Naive thymus-derived CD8-positive, alpha-beta T cell (primary cell): ENCODE measurements at regions of chr1 and their contacts with region 1.

Region 1: DNA sequence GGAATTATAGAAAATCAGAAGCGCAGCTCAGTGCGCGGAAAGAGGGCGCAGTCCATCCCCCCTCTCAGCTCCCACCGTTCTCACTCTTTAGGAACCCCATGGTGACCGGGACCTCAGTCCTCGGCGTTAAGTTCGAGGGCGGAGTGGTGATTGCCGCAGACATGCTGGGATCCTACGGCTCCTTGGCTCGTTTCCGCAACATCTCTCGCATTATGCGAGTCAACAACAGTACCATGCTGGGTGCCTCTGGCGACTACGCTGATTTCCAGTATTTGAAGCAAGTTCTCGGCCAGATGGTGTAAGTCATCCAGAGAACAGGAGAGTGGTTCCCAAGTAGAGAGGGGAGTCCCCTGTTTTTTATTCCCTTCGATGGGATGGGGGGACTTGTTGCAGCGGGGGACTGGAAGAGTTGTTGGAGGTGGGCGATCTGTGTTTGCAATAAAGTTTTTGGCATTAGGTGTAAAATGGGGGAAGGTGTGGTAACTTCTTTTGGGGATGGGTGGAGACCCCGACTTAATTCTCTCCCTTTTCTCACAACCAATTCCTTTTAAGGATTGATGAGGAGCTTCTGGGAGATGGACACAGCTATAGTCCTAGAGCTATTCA is 620 bp downstream of the PSMB4 start:
- DNase-seq: peak in 1 of 10 donors; percentile 4
- ATAC-seq: peak; percentile 8 to 14
- H3K4me3 Mint-ChIP-seq: peak overlapping the region; percentile 87 to 99 (median 94)
- H3K27ac Mint-ChIP-seq: peak overlapping the region; percentile 92 to 100 (median 98)
- H3K4me1 Mint-ChIP-seq: peaks cover 15 to 27% (median 25%) of the 10 kb centered on the region in 4 donors
- H3K27me3 Mint-ChIP-seq: no peaks in the 10 kb centered on the region

Region 2: GRCh38 chr1:151210830-151211229 is 189.2 kb before region 1 on chr1:
- POLR2A ChIA-PET with region 1: no interaction called
- DNase-seq: no peak
- ATAC-seq: no peak
- H3K4me3 Mint-ChIP-seq: peak overlapping the region in 1 of 10 donors; percentile 15
- H3K27ac Mint-ChIP-seq: peak overlapping the region in 3 of 10 donors; percentile 5 to 92 (median 11)
- H3K4me1 Mint-ChIP-seq: peaks cover 6 to 39% (median 19%) of the 10 kb centered on the region in 4 donors
- H3K27me3 Mint-ChIP-seq: no peaks in the 10 kb centered on the region

Region 3: GRCh38 chr1:151327223-151327902 is 72.6 kb before region 1 on chr1 and contains the start of gene PI4KB:
- POLR2A ChIA-PET with region 1: interaction called, 10 read pairs
- DNase-seq: peak; percentile 72 to 98 (median 90)
- ATAC-seq: peak; percentile 91 to 95
- H3K4me3 Mint-ChIP-seq: peak within 1 kb of the TSS; percentile 93 to 99 (median 97)
- H3K27ac Mint-ChIP-seq: peak within 1 kb of the TSS; percentile 94 to 100 (median 98)
- H3K4me1 Mint-ChIP-seq: peaks cover 24 to 47% (median 45%) of the 10 kb centered on the region in 4 donors
- H3K27me3 Mint-ChIP-seq: no peaks in the 10 kb centered on the region
- polyA plus RNA-seq, gene PI4KB: 42.4 to 63.3 (median 52.3) TPM

Region 4: DNA sequence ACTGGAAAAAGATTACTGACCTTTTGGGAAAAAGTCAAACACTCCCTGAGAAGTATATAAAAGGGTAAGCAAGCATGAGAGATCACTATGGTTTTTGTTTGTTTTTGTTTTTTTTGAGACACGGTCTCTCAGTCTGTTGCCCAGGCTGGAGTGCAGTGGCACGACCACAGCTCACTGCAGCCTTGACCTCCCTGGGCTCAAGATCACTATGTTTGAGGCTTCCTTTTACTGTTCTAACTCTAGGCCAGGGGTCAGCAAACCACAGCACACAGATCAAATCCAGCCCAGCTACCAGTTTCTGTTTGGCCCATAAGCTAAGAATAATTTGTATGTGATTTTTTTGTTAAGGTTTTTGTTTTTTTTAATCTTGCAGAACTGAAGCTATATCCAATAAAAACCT is 25.1 kb after region 1 on chr1:
- POLR2A ChIA-PET with region 1: no interaction called
- DNase-seq: no peak
- ATAC-seq: no peak
- H3K4me3 Mint-ChIP-seq: no peak overlapping the region
- H3K27ac Mint-ChIP-seq: peak overlapping the region in 7 of 10 donors; percentile 0 to 63 (median 25)
- H3K4me1 Mint-ChIP-seq: peaks cover 0 to 1% (median under 1%) of the 10 kb centered on the region in 4 donors
- H3K27me3 Mint-ChIP-seq: no peaks in the 10 kb centered on the region

Region 5: DNA sequence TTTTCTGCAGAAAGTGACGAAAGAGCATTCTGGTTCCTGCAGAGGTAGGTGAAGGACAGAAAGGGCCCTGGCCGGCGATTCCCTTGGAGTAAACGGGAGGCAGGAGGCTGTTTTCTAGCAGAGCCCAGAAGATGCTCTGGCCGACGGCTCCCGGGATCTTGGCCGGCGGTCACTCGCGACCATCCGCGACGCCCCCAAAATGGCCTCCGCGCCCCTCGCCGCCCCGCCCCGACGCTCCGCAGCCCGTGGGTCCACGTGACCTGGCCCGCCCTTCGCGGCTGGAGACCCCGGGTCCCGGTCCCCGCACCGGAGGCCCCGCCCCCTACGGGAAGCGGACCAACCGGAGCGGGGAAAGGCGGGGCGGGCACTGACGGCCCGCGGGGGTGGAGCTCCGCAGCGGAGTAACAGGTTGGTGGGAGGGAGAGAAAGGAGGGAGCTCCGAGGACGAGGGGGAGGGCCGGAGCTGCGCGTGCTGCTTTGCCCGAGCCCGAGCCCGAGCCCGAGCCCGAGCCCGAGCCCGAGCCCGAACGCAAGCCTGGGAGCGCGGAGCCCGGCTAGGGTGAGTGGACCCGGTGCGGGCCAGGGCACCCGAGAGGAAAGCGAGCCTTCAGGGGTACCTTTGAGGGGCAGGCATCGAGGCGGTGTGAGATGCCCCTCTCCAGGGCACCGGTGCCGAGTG is 111.1 kb after region 1 on chr1 and contains the start of gene CGN:
- POLR2A ChIA-PET with region 1: interaction called, 12 read pairs
- DNase-seq: peak; percentile 73 to 93 (median 84)
- ATAC-seq: peak; percentile 95
- H3K4me3 Mint-ChIP-seq: peak within 1 kb of the TSS; percentile 88 to 98 (median 94)
- H3K27ac Mint-ChIP-seq: peak within 1 kb of the TSS in 9 of 10 donors; percentile 83 to 95 (median 92)
- H3K4me1 Mint-ChIP-seq: peaks cover 7 to 31% (median 22%) of the 10 kb centered on the region in 4 donors
- H3K27me3 Mint-ChIP-seq: no peaks in the 10 kb centered on the region
- polyA plus RNA-seq, gene CGN: 0.08 to 1.3 (median 1.0) TPM